HCT116 (cell line): ENCODE measurements at regions of chr12 and their contacts with region 1.

Region 1: DNA sequence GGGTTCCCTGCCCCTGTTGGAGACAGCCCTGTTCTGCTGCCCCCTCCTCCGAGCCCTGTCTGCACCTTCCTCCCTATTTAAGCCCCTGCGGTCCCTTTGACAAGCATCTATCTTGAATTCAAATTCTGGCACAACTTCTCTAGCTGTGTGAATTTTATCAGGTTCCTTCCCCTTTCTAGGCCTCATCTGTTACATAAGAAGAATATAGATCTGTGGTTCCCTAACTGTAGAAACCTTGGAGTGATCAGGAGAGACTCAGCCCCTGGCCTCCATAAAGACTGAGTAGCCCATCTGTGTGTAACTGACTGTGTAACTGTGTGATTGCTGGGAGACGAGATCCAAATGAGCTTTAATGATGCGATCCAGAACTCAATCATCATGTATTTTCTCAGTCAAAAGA is 13.0 kb upstream of the RACGAP1 start:
- DNase-seq: no peak
- ATAC-seq: no peak
- H3K4me3 ChIP-seq: no peak overlapping the region
- H3K27ac ChIP-seq: no peak overlapping the region
- H3K4me1 ChIP-seq: peaks cover 0 to 9% of the 10 kb centered on the region in 2 experiments; a peak in 2 of 4 replicates
- H3K27me3 ChIP-seq: no peaks in the 10 kb centered on the region
- CTCF ChIP-seq: no peak
- POLR2A ChIP-seq: no peak
- RAD21 ChIP-seq: no peak

Region 2: DNA sequence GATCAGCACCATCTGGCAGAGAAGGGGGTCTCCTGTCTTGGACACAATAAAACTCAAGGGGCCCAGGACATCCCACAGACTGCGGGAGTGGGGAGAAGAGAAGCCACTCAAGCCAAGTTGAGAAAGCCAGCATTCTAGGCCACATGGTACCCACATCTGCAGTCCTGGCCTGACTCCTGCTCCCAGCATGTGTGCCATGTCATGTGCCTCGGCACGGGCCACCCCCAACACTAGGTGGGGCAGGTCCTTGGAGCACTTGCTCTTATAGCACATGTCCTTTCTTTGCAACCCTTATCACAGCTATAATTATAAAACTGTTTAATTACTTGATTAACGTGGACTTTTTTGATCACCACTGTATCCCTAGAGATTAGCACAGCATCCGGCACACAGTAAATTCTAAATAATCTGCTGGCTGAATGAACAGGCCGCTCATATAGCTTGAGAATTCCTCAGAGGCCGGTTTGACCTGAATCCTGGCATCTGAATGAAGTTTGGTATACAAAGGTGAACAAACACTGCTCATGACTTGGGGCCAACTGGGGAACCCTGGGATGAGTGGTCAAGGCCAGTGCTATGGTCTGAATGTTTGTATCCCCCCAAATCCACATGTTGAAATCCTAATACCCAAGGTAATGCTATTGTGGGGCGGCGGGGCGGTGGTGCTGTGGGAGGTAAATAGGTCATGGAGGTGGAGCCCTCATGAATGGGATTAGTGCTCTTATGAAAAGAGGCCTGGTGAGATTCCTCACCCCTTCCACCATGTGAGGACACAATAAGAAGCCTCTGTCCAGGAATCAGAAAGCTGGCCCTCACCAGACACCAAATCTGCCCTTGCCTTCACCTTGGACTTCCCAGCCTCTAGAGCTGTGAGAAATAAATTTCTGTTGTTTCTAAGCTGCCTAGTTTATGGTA is 216.7 kb before region 1 on chr12:
- CTCF ChIA-PET with region 1: no interaction called
- POLR2A ChIA-PET with region 1: no interaction called
- RAD21 ChIA-PET with region 1: no interaction called
- intact Hi-C with region 1: no loop called
- DNase-seq: no peak
- ATAC-seq: no peak
- H3K4me3 ChIP-seq: no peak overlapping the region
- H3K27ac ChIP-seq: no peak overlapping the region
- H3K4me1 ChIP-seq: peaks cover 0 to 5% of the 10 kb centered on the region in 2 experiments; a peak in 1 of 4 replicates
- H3K27me3 ChIP-seq: no peaks in the 10 kb centered on the region
- CTCF ChIP-seq: no peak
- POLR2A ChIP-seq: no peak
- RAD21 ChIP-seq: no peak

Region 3: DNA sequence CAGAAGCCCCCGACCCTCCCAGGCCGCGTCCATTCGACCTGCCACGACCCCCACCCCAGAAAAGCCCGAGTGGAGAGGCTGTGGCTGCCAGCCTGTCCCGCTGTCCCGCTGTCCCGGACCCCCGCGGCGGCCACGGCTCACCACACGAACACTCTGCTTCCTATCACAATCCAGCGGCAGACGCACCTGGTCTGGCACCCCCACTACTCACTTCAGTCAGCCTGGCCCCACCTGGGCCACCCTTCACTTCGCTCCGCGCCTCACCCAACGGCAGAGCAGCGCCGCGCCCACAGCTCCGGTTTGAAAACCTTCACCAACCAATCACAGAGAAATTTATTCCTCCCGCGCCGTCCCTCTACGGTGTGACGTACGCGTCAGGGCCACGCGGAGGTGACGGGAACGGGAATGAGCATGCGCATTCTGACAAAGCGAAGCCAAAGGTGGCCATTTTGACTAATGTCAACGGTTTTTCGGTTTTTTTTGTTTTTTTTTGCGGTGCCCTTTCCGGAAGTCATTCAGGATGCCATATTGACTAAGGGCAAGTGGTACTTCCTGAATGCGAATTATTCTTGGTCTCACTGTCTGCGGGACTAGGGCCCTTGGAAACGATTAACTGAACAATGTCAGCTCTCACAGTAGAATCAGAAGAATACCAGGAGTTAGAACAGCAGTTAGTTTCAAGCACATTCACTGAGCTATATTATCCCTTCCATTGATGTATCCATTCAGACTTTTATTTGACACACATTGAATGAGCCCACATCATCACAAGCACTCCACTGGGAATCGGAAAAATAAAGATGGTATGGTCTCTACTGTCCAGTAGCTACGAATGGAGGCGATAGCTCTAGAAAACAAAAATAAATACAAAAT is 12.9 kb before region 1 on chr12 and contains the start of gene RACGAP1:
- CTCF ChIA-PET with region 1: interaction called, 13 read pairs
- POLR2A ChIA-PET with region 1: interaction called, 3 read pairs
- RAD21 ChIA-PET with region 1: no interaction called
- intact Hi-C with region 1: no loop called
- DNase-seq: peak; percentile 98
- ATAC-seq: peak; percentile 98
- H3K4me3 ChIP-seq: peak within 1 kb of the TSS; percentile 61 to 95
- H3K27ac ChIP-seq: peak within 1 kb of the TSS; percentile 71
- H3K4me1 ChIP-seq: peaks cover 11 to 20% of the 10 kb centered on the region in 2 experiments
- H3K27me3 ChIP-seq: no peaks in the 10 kb centered on the region
- CTCF ChIP-seq: no peak
- POLR2A ChIP-seq: peak; percentile 42
- RAD21 ChIP-seq: no peak
- total RNA-seq, gene RACGAP1: 147 TPM

Region 4: GRCh38 chr12:50055831-50056638 is 17.7 kb after region 1 on chr12:
- CTCF ChIA-PET with region 1: interaction called, 32 read pairs
- POLR2A ChIA-PET with region 1: no interaction called
- RAD21 ChIA-PET with region 1: interaction called, 5 to 6 read pairs
- intact Hi-C with region 1: no loop called
- DNase-seq: peak; percentile 48
- ATAC-seq: peak; percentile 61
- H3K4me3 ChIP-seq: no peak overlapping the region
- H3K27ac ChIP-seq: no peak overlapping the region; the same call in 1 of the 2 replicates
- H3K4me1 ChIP-seq: peaks cover 15 to 25% of the 10 kb centered on the region in 2 experiments; a peak in 3 of 4 replicates
- H3K27me3 ChIP-seq: no peaks in the 10 kb centered on the region; the same call in 1 of the 2 replicates
- CTCF ChIP-seq: peak; percentile 91 to 98 (median 96)
- POLR2A ChIP-seq: no peak
- RAD21 ChIP-seq: peak; percentile 90